Activated B cell treated with CpG ODN at 0.5 μM for 24 hours (primary cell): ENCODE measurements at regions of chr21 and their contacts with region 1.

Region 1: DNA sequence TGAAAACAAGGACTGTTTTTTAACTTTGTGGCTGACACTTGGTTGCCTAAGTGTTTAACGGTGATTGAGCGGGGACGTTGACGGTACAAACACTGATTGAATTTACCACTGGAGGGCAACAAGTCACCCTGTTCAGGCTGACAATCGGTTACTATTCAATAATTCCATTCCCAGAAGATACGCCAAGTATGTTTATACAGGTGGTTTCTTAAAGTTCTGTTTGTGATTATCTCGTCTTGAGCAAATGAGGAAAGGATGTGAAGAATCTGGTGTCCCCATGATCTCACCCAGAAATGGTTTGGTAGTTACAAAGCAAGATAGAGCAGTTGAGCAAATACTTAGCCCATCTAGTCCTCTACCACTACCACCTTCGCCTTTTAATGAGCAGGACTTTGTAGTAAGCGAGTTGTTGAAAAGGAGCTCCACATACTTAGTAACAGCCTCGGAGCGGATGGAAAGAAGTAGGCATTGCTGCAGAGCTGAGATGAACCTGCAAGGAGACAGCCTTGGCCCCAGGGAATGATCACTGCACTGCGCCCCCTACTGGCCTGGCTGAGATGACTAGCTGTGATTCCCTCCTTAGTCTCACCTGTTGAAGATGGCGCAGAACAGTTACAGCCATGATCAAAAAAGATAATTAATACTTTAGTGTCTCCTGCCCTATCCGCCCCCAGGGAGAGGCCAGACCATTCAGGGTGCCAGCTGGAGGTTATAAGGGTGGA is 36.3 kb downstream of the IFNAR1 start:
- DNase-seq: peak; percentile 73
- ATAC-seq: peak; percentile 80
- H3K4me3 Mint-ChIP-seq: peak overlapping the region; percentile 78
- H3K27ac Mint-ChIP-seq: peak overlapping the region; percentile 93
- H3K4me1 Mint-ChIP-seq: peaks cover 41% of the 10 kb centered on the region
- H3K27me3 Mint-ChIP-seq: no peaks in the 10 kb centered on the region
- CTCF ChIP-seq: peak; percentile 87

Region 2: DNA sequence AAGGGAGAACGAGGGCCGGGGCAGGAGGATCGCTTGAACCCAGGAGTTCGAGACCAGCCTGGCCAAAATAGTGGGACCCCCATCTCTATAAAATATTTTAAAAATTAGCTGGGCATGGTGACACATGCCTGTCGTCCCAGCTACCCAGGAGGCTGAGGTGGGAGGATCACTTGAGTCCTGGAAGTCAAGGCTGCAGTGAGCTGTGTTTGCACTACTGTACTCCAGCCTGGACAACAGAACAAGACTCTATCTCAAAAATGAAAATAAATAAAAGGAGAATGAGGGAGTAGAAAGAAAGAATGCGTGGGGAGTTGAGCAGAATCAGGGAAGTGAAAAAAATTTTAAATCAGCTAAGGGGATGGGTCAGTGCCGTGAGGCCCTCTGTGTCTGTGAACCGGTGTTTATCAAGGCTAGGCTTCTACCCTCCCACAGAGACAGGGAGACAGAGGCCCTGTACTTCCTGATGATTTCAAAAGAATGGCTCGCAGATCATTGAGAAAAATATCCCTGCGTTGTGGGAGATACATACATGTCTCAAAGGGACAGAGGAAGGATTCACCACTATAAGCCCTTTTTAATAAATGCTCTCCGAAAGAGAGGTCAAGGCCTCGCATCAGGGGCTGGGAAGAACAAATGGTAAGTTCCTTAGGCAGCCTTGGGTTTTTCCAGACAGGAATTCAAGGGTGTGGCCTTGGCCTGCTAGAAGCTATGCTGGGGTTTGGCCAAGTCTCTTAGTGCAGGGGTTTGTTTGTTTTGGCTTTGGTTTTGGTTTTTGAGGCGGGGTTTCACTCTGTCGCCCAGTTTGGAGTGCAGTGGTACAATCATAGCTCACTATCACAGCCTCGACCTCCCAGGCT is 74.2 kb before region 1 on chr21:
- CTCF ChIA-PET with region 1: no interaction called
- POLR2A ChIA-PET with region 1: no interaction called
- intact Hi-C with region 1: no loop called
- DNase-seq: no peak
- ATAC-seq: no peak
- H3K4me3 Mint-ChIP-seq: no peak overlapping the region
- H3K27ac Mint-ChIP-seq: no peak overlapping the region
- H3K4me1 Mint-ChIP-seq: no peaks in the 10 kb centered on the region
- H3K27me3 Mint-ChIP-seq: no peaks in the 10 kb centered on the region
- CTCF ChIP-seq: no peak

Region 3: GRCh38 chr21:33324291-33325221 is 36.5 kb before region 1 on chr21 and contains the start of gene IFNAR1:
- CTCF ChIA-PET with region 1: interaction called, 20 read pairs
- POLR2A ChIA-PET with region 1: interaction called, 54 read pairs
- intact Hi-C with region 1: loop called (anchors 1 kb)
- DNase-seq: peak; percentile 97
- ATAC-seq: peak; percentile 80
- H3K4me3 Mint-ChIP-seq: no peak within 1 kb of the TSS
- H3K27ac Mint-ChIP-seq: no peak within 1 kb of the TSS
- H3K4me1 Mint-ChIP-seq: peaks cover 32% of the 10 kb centered on the region
- H3K27me3 Mint-ChIP-seq: no peaks in the 10 kb centered on the region
- CTCF ChIP-seq: no peak
- total RNA-seq, gene IFNAR1: 33.9 and 34.5 TPM in 2 replicates

Region 4: DNA sequence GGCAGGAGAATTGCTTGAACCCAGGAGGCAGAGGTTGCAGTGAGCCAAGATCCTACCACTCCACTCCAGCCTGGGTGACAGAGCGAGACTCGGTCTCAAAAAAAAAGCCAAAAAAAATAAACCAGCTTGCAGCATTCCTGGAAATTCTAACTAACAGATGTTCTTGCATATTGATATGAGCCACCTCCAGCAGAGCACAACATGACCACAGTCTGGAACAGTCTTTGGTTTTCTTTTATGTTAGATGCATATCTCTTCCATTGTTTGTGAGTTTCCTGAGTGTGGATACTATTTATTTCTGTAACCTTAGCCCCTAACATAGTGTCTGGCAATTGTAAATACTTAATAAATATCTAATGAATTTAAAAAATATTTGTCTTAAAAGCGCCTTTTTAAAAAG is 12.3 kb before region 1 on chr21:
- CTCF ChIA-PET with region 1: interaction called, 34 read pairs
- POLR2A ChIA-PET with region 1: interaction called, 6 read pairs
- intact Hi-C with region 1: no loop called
- DNase-seq: no peak
- ATAC-seq: no peak
- H3K4me3 Mint-ChIP-seq: no peak overlapping the region
- H3K27ac Mint-ChIP-seq: no peak overlapping the region
- H3K4me1 Mint-ChIP-seq: peaks cover 8% of the 10 kb centered on the region
- H3K27me3 Mint-ChIP-seq: no peaks in the 10 kb centered on the region
- CTCF ChIP-seq: no peak

Region 5: DNA sequence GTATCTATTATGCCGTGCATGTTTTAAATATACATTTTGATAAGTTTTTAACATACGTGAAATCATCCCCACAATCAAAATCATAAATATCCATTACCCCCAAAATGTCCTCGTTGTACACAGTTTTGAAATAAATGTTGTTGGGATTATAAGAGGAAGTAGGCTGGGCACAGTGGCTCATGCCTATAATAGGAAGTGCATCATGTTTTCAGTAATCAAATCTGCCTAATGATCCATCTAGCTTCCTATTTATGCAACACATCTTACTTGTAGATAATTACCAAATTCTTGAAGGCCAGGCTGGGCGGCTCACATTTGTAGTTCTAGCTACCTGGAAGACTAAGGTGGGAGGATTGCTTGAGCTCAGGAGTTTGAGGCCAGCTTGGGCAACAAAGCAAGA is 27.1 kb after region 1 on chr21:
- CTCF ChIA-PET with region 1: interaction called, 10 read pairs
- POLR2A ChIA-PET with region 1: interaction called, 102 read pairs
- intact Hi-C with region 1: no loop called
- DNase-seq: no peak
- ATAC-seq: no peak
- H3K4me3 Mint-ChIP-seq: peak overlapping the region; percentile 19
- H3K27ac Mint-ChIP-seq: peak overlapping the region; percentile 78
- H3K4me1 Mint-ChIP-seq: peaks cover 50% of the 10 kb centered on the region
- H3K27me3 Mint-ChIP-seq: no peaks in the 10 kb centered on the region
- CTCF ChIP-seq: no peak

Region 6: DNA sequence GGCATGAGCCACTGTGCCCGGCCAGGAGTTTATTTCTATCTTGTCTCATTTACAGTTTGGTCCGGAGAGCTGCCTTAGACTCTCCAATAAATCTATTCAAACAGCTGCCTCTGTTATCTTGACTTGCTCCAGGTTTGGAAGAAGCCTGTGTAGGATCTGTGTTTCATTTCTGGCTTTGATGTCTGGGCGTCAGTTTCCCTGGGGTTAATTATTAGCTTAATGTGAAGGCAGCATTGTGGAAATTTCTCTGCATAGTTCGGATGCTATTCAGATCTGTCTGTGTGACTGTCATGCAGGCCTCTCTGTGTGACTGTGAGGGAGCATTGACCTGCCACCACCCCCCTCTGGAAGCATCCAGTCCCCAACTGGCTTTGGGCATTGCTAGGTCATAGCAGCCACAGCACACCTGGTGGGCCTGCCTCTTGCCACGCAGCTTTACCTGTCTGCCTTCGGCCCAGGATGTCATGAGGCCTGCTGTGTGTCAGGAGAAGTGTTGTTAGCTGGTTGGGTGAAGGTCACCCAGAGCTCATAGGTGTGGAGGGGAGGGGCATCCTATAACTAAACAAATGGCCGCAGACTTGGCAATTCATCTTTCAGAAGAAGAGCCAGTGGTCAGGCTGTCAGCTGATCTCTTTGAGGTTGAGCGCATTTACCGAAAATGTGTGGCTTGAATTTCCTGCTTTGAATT is 51.9 kb after region 1 on chr21:
- CTCF ChIA-PET with region 1: interaction called, 22 read pairs
- POLR2A ChIA-PET with region 1: interaction called, 85 read pairs
- intact Hi-C with region 1: loop called (anchors 2 kb)
- DNase-seq: no peak
- ATAC-seq: peak; percentile 49
- H3K4me3 Mint-ChIP-seq: peak overlapping the region; percentile 50
- H3K27ac Mint-ChIP-seq: peak overlapping the region; percentile 86
- H3K4me1 Mint-ChIP-seq: peaks cover 60% of the 10 kb centered on the region
- H3K27me3 Mint-ChIP-seq: no peaks in the 10 kb centered on the region
- CTCF ChIP-seq: no peak

Region 7: GRCh38 chr21:33542640-33543504 is 181.8 kb after region 1 on chr21 and contains the start of gene SON:
- CTCF ChIA-PET with region 1: no interaction called
- POLR2A ChIA-PET with region 1: interaction called, 6 read pairs
- intact Hi-C with region 1: loop called (anchors 5 kb)
- DNase-seq: peak; percentile 86
- ATAC-seq: peak; percentile 88
- H3K4me3 Mint-ChIP-seq: peak within 1 kb of the TSS; percentile 98
- H3K27ac Mint-ChIP-seq: peak within 1 kb of the TSS; percentile 100
- H3K4me1 Mint-ChIP-seq: peaks cover 48% of the 10 kb centered on the region
- H3K27me3 Mint-ChIP-seq: no peaks in the 10 kb centered on the region
- CTCF ChIP-seq: no peak
- total RNA-seq, gene SON: 429 and 474 TPM in 2 replicates